Heart left ventricle (tissue), 16 donors: ENCODE measurements at regions of chr9 and their contacts with region 1.

Region 1: GRCh38 chr9:10957878-10958277 is 345.1 kb upstream of the PTPRD start:
- DNase-seq: no peak
- ATAC-seq: no peak
- H3K4me3 ChIP-seq: no peak overlapping the region
- H3K27ac ChIP-seq: no peak overlapping the region
- H3K4me1 ChIP-seq: no peaks in the 10 kb centered on the region
- H3K27me3 ChIP-seq: no peaks in the 10 kb centered on the region
- CTCF ChIP-seq: no peak
- POLR2A ChIP-seq: no peak

Region 2: DNA sequence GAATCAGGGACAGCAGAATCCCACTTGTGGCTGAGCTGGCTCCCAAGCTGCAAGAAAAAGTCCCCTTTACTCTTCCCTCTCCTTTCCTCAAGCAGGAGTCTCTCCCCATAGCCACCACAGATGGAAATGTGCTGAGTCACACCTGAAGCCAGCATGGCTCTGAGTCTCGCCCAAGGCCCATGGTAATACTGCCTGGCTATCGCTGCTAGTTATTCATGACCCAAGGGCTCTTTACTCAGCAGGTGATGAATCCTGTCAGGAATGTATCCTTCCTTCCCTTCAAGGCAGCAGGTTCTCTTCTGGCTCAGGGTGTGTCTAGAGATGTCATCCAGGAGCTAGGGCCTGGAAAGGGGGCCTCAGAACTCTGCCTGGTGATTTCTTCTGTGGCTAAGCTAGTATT is 58.2 kb after region 1 on chr9:
- intact Hi-C with region 1: loop called in 2 of 10 experiments (anchors 10 kb)
- DNase-seq: no peak
- ATAC-seq: no peak
- H3K4me3 ChIP-seq: no peak overlapping the region
- H3K27ac ChIP-seq: no peak overlapping the region
- H3K4me1 ChIP-seq: no peaks in the 10 kb centered on the region
- H3K27me3 ChIP-seq: no peaks in the 10 kb centered on the region
- CTCF ChIP-seq: no peak
- POLR2A ChIP-seq: no peak

Region 3: DNA sequence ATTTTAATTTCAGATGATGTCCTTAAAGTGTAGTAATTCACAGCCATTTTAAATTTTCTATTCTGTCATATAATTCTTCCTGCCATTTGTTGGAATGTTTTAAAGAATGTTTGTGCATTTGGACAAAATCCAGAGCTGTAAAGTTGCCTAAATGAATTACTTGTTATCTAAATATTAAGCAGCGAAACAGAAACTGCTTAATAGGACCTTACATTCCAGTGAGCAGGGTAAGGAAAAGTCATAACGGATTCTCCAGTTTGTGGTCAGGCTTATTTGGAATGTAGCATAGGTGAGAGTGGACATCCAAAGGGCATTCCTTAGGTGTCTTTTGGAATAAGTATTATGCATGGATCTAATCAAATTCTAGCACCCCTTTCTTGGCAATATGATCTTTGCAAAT is 65.3 kb after region 1 on chr9:
- intact Hi-C with region 1: loop called in 2 of 10 experiments (anchors 10 kb)
- DNase-seq: no peak
- ATAC-seq: no peak
- H3K4me3 ChIP-seq: no peak overlapping the region
- H3K27ac ChIP-seq: no peak overlapping the region
- H3K4me1 ChIP-seq: no peaks in the 10 kb centered on the region
- H3K27me3 ChIP-seq: no peaks in the 10 kb centered on the region
- CTCF ChIP-seq: no peak
- POLR2A ChIP-seq: no peak